ENCODE measurements at regions of chr1 and their contacts with region 1.

Region 1: GRCh38 chr1:30727824-30728223 is 4.4 kb upstream of the MATN1 start:
- DNase-seq: no peak
- H3K4me3 ChIP-seq: no peak overlapping the region
- H3K27ac ChIP-seq: no peak overlapping the region
- H3K4me1 ChIP-seq: 0 out of 2 replicates have a peak, but pooled peaks cover 6% of the 10 kb centered on the region
- H3K27me3 ChIP-seq: no peaks in the 10 kb centered on the region
- CTCF ChIP-seq: no peak

Region 2: DNA sequence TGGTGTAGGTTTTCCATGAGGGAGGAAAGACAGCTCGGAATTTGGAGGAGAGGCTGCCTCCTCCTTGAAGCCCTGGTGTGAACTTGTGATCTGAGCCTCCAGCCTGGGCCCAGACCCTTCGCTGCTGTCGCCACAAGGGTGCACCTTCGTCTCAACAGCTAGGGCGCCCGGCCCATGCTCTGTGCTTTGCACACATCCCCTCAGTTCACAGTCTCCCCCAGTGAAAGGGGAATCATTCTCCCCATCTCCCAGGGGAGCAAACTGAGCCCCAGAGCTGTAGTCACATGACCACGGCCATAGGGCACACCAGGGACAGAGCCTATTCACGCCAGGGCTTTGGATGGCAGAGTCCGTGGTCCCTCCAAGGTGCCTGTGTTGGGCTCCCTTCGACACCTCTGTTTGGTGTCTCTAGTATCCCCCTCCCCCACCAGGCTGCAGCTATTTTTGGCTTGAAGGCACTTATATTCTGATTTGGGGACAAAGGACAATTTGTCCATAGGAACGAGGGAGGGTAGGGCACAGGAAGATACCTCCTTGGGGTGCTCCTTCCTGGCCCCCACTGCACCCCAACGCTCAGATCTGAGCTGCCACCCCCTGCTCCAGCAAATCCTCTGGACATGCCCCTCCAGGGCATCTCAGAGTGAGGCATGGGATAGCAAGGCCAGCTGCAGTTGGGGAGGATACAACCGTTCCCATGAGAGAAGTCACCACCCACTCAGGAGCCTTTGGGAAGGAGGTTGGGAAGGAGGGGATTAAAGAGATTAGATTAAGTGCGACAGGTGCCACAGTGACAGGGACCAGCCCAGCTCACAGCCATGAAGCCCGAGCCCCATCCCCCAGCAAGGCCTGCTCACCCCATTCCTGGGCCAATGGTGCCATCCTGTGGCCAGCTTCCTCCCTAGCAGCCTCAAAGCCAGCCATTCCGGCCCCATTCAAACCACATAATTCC is 20.1 kb before region 1 on chr1:
- CTCF ChIA-PET with region 1: no interaction called
- POLR2A ChIA-PET with region 1: no interaction called
- intact Hi-C with region 1: no loop called
- DNase-seq: peak in 1 of 2 experiments; percentile 75
- H3K4me3 ChIP-seq: no peak overlapping the region
- H3K27ac ChIP-seq: no peak overlapping the region
- H3K4me1 ChIP-seq: no peaks in the 10 kb centered on the region
- H3K27me3 ChIP-seq: no peaks in the 10 kb centered on the region
- CTCF ChIP-seq: peak; percentile 85

Region 3: DNA sequence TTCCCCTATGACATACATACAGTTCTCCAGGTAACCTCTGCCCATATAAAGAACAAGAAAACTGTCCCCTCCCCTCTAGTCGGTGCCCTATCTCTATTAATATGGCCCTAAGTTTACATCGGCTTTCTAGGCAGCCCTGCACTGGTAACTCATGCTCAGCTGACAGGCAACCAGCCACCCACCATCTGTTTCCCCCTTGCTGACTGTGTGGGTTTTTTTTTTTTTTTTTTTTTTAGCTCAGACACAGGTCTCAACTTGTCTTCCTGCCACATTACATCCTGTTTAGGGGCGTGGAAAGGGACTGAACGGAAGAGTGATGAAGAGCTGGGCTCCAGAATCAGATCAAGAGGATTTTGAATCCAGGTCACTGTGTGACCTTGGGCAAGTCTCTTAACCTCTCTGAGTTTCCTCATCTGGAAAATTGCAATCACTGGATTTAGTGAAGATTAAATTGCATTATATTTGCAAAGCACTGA is 15.8 kb after region 1 on chr1:
- CTCF ChIA-PET with region 1: no interaction called
- POLR2A ChIA-PET with region 1: interaction called, 19 read pairs
- intact Hi-C with region 1: no loop called
- DNase-seq: no peak
- H3K4me3 ChIP-seq: no peak overlapping the region
- H3K27ac ChIP-seq: no peak overlapping the region
- H3K4me1 ChIP-seq: peaks cover 20% of the 10 kb centered on the region
- H3K27me3 ChIP-seq: no peaks in the 10 kb centered on the region
- CTCF ChIP-seq: no peak

Measured in PC-9 (cell line).